ENCODE measurements at regions of chr12 and their contacts with region 1.

Region 1: DNA sequence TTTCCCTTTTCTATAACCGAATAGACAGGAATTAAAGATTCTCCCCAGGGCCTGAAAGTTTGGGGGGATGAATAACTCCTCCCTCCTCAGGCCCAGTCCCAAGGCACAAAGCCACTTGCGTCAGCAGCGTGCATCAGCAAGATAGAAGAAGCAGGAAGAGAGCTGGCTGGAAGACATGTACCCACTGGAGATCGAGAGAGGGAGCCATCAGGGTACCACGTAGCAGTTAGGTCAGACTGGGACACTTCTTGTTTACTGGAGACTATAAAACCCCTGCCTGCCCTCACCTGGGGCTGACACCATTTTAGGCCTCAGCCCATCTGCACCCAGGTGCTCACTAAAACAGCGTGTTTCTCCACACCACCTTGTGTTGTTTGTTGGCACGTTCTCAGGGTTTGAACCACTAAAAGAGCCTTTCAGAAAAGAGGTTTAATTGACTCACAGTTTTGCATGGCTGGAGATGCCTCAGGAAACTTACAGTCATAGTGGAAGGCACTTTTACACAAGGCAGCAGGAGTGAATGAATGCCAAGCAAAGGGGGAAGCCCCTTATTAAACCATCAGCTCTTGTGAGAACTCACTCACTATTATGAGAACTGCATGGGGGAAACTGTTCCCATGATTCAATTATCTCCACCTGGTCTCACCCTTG is 93.2 kb downstream of the TMTC3 start:
- DNase-seq: peak; percentile 65
- H3K4me3 Mint-ChIP-seq: no peak overlapping the region
- H3K27ac Mint-ChIP-seq: no peak overlapping the region
- H3K4me1 Mint-ChIP-seq: peaks cover 29% of the 10 kb centered on the region
- H3K27me3 Mint-ChIP-seq: peaks cover 4% of the 10 kb centered on the region

Region 2: DNA sequence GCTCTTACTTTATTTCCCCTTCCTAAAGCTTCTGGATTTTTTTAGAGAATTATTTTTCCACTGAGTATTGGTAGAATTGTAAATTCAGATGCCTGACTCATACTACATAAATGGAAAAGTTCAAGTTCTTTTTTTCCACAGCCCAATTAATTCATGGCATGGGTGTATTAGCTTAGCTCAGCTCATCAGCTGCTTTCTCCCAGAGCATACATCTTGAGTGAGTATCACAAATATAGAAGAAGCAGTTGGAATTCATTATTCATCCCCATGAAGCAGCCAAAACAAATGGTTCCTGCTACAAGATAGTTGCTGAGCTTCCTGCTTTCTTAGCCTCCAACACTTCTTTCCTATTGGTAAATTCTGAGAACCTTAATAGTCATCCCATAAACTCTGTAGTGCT is 311.2 kb before region 1 on chr12:
- CTCF ChIA-PET with region 1: no interaction called
- intact Hi-C with region 1: no loop called
- DNase-seq: no peak
- H3K4me3 Mint-ChIP-seq: no peak overlapping the region
- H3K27ac Mint-ChIP-seq: no peak overlapping the region
- H3K4me1 Mint-ChIP-seq: no peaks in the 10 kb centered on the region
- H3K27me3 Mint-ChIP-seq: no peaks in the 10 kb centered on the region

Region 3: DNA sequence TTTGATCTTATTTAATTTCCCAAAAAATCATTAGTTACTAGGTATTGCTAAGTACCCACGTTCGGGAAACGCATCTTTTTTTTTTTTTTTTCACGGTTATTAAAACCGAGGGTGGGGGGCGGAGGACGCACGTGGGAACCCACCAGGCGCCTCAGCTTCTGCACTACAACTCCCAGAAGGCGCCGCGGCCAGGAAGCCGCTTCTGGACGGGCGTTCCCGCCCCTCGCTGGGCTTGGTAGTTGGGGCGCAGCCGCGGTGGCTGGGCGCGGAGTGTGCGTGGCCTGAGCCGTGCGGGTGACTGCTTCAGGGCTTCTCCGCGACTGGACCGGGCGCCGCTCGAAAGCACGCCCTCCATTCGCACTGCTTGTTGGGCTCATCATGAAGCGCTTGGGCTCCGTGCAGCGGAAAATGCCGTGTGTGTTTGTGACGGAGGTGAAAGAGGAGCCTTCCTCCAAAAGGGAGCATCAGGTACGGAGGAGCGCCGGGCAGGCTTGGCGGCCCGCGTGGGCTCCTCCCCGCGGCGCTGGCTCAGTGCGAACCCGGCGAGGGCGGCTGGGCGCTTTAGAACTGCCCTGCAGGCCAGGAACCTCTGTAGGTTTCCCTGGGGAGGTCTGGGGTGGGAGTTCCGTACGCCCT is 199.9 kb before region 1 on chr12:
- CTCF ChIA-PET with region 1: no interaction called
- intact Hi-C with region 1: loop called (anchors 1 kb)
- DNase-seq: peak; percentile 89
- H3K4me3 Mint-ChIP-seq: peak overlapping the region; percentile 93
- H3K27ac Mint-ChIP-seq: peak overlapping the region; percentile 90
- H3K4me1 Mint-ChIP-seq: peaks cover 52% of the 10 kb centered on the region
- H3K27me3 Mint-ChIP-seq: no peaks in the 10 kb centered on the region

Region 4: DNA sequence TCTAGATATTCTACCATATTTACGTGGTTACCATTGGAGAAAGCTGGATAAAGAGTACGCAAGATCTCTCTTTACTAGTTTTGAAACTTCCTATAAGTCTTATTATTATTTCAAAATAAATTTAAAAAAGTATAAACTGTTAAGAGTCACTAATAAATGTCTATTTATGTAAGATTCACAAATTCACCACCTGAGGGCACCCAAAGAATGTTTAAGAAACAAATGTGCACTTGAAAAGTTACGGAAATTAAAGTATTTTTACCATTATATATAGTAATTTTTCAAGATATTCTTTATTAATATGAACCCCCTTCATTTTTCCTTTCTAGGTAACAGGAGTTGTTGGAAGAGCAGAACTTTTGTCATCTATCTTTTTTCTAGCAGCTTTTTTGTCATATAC is 81.3 kb before region 1 on chr12:
- CTCF ChIA-PET with region 1: no interaction called
- intact Hi-C with region 1: loop called (anchors 1 kb)
- DNase-seq: no peak
- H3K4me3 Mint-ChIP-seq: no peak overlapping the region
- H3K27ac Mint-ChIP-seq: no peak overlapping the region
- H3K4me1 Mint-ChIP-seq: peaks cover 24% of the 10 kb centered on the region
- H3K27me3 Mint-ChIP-seq: no peaks in the 10 kb centered on the region

Region 5: DNA sequence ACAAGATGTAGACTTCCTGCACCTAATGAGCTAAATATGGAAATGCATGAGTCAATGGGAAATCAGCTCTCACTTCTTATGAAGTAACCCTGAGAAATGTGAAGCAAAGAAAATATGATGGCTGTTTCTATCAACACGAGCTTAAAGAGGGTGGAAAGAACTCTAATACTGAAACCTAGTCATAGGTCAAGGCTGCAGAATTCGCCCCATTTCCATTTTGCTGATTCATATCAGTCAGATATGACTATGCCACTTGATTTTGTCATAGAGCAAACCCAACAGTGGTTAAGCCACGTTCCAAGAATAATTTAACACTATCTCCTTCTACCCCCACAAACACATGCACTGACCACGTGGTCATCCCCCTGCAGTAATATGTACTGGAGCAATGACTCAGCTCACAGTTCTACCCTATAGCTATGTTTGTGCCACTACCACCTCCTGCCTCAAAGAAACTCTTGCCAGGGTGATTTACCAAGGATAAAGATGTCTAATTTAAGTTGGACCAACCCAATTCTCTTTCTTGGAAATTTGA is 64.3 kb after region 1 on chr12:
- CTCF ChIA-PET with region 1: no interaction called
- intact Hi-C with region 1: loop called (anchors 1 kb)
- DNase-seq: peak; percentile 50
- H3K4me3 Mint-ChIP-seq: no peak overlapping the region
- H3K27ac Mint-ChIP-seq: peak overlapping the region; percentile 9
- H3K4me1 Mint-ChIP-seq: peaks cover 17% of the 10 kb centered on the region
- H3K27me3 Mint-ChIP-seq: peaks cover 5% of the 10 kb centered on the region